GM10248 (cell line): ENCODE measurements at regions of chr13 and their contacts with region 1.

Region 1: GRCh38 chr13:95367309-95367843 is 66.1 kb upstream of the ABCC4 start:
- DNase-seq: no peak
- CTCF ChIP-seq: no peak

Region 2: DNA sequence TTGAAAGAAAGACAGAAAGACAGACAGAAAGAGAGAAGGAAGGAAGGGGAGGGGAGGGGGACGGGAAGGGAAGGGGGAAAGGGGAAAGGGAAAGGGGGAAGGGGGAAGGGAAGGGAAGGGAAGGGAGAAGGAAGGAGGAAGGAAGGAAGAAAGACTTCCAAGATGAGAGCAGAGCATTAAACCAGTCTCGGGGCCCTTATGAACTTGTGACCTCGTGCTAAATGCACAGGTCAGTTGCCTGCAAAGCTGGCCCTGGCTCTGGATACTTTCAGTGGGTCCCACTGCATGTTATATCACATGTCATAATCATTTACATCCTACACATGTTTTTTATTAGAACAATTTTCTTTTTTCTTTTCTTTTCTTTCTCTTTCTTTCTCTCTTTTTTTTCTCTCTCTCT is 41.9 kb before region 1 on chr13:
- CTCF ChIA-PET with region 1: no interaction called
- POLR2A ChIA-PET with region 1: interaction called, 11 read pairs
- DNase-seq: no peak
- CTCF ChIP-seq: no peak

Region 3: GRCh38 chr13:95378603-95379002 is 11.2 kb after region 1 on chr13:
- CTCF ChIA-PET with region 1: interaction called, 19 read pairs
- POLR2A ChIA-PET with region 1: interaction called, 4 read pairs
- DNase-seq: no peak
- CTCF ChIP-seq: no peak

Region 4: GRCh38 chr13:95420501-95420900 is 53.1 kb after region 1 on chr13:
- CTCF ChIA-PET with region 1: no interaction called
- POLR2A ChIA-PET with region 1: no interaction called
- DNase-seq: no peak
- CTCF ChIP-seq: no peak